Cardiac septum (tissue), 1 donor: ENCODE measurements at regions of chr19 and their contacts with region 1.

Region 1: GRCh38 chr19:12994701-12995595 is at the start of gene NFIX:
- DNase-seq: no peak
- total RNA-seq, gene NFIX: 123 TPM

Region 2: DNA sequence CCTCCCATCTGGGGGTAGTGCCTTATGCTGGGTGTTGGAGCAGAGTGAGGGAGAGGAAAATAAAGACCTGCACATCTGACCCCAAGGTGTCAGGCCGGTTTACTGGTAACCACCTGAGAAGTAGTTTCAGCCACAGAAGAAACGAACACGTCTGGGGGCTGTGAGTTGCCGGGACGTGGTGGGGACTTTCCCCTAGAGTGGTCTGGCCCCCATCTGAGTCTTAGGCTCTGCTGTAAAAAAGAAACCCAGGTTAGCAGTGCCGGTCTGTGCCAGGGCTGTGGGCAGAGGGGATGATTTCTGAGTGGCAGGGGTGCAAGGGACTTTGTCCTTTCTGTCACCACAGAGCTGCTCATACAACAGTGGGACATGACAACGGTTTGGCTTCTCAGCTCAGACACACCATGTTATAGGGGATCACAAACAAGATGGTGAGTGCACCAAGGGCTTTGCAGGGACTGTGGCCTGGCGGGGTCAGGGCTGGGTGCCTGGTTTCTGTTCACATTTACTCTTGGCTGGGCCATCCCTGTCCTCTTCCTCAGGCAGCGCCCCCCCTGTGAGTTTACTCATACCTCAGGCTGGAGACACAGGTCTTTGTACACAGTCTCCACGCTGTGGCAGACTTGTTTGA is 94.9 kb before region 1 on chr19:
- intact Hi-C with region 1: no loop called
- DNase-seq: no peak

Region 3: GRCh38 chr19:13033819-13034611 is 39.1 kb after region 1 on chr19:
- intact Hi-C with region 1: loop called (anchors 5 kb)
- DNase-seq: peak; percentile 90

Region 4: GRCh38 chr19:13537454-13537853 is 542.5 kb after region 1 on chr19:
- intact Hi-C with region 1: no loop called
- DNase-seq: no peak